Thyroid gland (tissue), 4 donors: ENCODE measurements at regions of chr1 and their contacts with region 1.

Region 1: GRCh38 chr1:109041621-109042468 is at the start of gene WDR47:
- DNase-seq: peak; percentile 97 to 98
- H3K4me3 ChIP-seq: peak within 1 kb of the TSS; percentile 75 to 99 (median 99)
- H3K27ac ChIP-seq: peak within 1 kb of the TSS; percentile 65 to 78 (median 74)
- H3K4me1 ChIP-seq: peaks cover 0 to 4% of the 10 kb centered on the region in 2 donors
- H3K27me3 ChIP-seq: no peaks in the 10 kb centered on the region
- CTCF ChIP-seq: peak in 1 of 6 experiments; percentile 9
- POLR2A ChIP-seq: peak; percentile 70 to 98
- total RNA-seq, gene WDR47: 9.4 to 23.2 (median 12.9) TPM

Region 2: DNA sequence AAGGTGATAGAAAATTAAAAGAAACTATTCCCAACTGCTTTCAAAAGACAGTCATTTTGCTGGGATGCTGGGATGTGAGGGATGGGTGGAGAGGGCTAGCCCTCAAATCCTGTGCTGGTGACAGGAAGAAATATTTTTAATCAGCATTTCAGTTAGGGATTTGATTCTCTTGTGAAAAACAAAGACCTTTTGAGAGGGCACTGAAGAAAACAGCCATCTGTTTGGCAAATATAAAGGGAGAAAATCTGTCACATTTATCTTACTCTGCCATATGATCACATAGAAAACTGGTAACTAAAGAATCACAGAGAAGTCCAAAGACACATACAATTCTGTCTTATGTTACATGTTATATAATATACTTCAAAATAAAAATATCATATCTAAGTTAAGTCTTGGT is 283.0 kb before region 1 on chr1:
- intact Hi-C with region 1: no loop called
- DNase-seq: no peak
- H3K4me3 ChIP-seq: no peak overlapping the region
- H3K27ac ChIP-seq: no peak overlapping the region
- H3K4me1 ChIP-seq: no peaks in the 10 kb centered on the region
- H3K27me3 ChIP-seq: no peaks in the 10 kb centered on the region
- CTCF ChIP-seq: no peak
- POLR2A ChIP-seq: no peak

Region 3: DNA sequence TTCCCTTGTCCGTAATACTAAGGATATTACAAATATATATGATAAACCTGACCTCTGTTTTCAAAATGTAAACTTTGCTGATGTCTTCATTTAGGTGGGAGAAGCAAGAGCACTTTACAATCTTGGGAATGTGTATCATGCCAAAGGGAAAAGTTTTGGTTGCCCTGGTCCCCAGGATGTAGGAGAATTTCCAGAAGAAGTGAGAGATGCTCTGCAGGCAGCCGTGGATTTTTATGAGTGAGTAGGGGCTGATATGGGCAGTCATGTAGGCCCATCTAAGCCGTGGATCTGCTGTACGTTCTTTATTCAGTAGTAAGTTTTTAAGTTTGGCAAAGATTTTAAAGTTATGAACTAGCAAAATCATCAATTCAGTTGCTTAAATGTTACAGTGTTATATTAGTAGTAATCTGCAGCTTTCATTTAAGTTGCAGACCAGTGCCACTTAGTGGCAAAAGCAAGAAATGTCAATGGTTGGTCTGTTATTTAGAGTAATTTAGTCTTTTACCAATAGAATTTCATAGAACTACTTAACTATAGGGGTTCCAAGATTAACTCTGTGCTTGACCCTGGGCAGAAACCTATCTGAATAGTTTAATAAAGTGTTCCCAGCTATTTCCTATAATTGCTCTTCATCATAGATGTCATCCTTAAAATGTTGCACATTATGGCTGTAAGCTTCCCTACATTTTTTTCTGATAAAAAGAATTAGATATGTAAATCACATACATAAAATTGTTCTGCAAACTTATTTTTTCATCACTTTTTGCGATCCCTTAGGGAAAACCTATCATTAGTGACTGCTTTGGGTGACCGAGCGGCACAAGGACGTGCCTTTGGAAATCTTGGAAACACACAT is 143.8 kb before region 1 on chr1:
- intact Hi-C with region 1: no loop called
- DNase-seq: peak in 1 of 2 donors; percentile 17
- H3K4me3 ChIP-seq: no peak overlapping the region
- H3K27ac ChIP-seq: no peak overlapping the region
- H3K4me1 ChIP-seq: no peaks in the 10 kb centered on the region
- H3K27me3 ChIP-seq: no peaks in the 10 kb centered on the region
- CTCF ChIP-seq: peak; percentile 33 to 77 (median 62)
- POLR2A ChIP-seq: no peak

Region 4: DNA sequence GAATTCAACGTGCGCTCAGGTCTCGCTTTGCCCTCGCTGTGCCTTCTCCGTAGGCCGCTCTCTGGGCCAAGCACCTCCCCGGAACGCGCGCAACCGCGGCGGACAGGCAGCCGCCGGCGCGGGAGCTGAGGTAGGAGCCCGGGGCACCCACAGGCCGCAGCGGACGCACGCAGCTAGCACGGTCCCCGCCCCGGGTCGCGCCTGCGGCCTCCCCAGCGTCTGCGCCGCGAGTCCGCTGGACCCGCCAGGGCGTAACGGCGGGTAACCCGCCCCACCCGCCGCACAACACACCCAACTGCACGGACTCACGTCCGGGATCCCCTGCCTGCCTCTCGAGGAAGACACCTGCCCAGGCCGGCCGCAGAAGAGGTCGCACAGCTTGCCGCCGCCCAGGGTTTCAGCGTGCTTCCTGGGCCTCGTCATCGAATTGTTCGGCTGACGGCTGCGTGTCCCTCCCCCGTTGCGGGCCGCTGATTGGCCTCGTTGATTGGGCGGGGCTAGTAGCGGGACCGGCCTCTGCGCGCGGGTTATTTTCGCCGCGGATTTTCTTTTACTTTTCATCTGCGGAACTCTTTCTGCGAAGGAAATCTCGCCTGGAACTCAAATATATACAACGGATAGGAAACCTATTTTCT is 78.7 kb before region 1 on chr1 and contains the start of gene CLCC1:
- intact Hi-C with region 1: loop called (anchors 5 kb)
- DNase-seq: peak; percentile 94 to 96
- H3K4me3 ChIP-seq: peak within 1 kb of the TSS; percentile 44 to 59 (median 58)
- H3K27ac ChIP-seq: peak within 1 kb of the TSS; percentile 86 to 92 (median 89)
- H3K4me1 ChIP-seq: peaks cover 17 to 21% of the 10 kb centered on the region in 2 donors
- H3K27me3 ChIP-seq: no peaks in the 10 kb centered on the region
- CTCF ChIP-seq: peak in 1 of 6 experiments; percentile 17
- POLR2A ChIP-seq: peak; percentile 37 to 93
- total RNA-seq, gene CLCC1: 29.3 to 35.6 (median 32.9) TPM

Region 5: GRCh38 chr1:108983114-108983513 is 58.7 kb before region 1 on chr1:
- intact Hi-C with region 1: no loop called
- DNase-seq: no peak
- H3K4me3 ChIP-seq: no peak overlapping the region
- H3K27ac ChIP-seq: no peak overlapping the region
- H3K4me1 ChIP-seq: no peaks in the 10 kb centered on the region
- H3K27me3 ChIP-seq: no peaks in the 10 kb centered on the region
- CTCF ChIP-seq: no peak
- POLR2A ChIP-seq: no peak

Region 6: GRCh38 chr1:109170035-109170764 is 128.4 kb after region 1 on chr1:
- intact Hi-C with region 1: no loop called
- DNase-seq: no peak
- H3K4me3 ChIP-seq: no peak overlapping the region
- H3K27ac ChIP-seq: peak overlapping the region in 1 of 3 donors; percentile 73
- H3K4me1 ChIP-seq: peaks cover 11 to 19% of the 10 kb centered on the region in 2 donors
- H3K27me3 ChIP-seq: no peaks in the 10 kb centered on the region
- CTCF ChIP-seq: no peak
- POLR2A ChIP-seq: no peak